ENCODE measurements at regions of chr1 and their contacts with region 1.

Region 1: DNA sequence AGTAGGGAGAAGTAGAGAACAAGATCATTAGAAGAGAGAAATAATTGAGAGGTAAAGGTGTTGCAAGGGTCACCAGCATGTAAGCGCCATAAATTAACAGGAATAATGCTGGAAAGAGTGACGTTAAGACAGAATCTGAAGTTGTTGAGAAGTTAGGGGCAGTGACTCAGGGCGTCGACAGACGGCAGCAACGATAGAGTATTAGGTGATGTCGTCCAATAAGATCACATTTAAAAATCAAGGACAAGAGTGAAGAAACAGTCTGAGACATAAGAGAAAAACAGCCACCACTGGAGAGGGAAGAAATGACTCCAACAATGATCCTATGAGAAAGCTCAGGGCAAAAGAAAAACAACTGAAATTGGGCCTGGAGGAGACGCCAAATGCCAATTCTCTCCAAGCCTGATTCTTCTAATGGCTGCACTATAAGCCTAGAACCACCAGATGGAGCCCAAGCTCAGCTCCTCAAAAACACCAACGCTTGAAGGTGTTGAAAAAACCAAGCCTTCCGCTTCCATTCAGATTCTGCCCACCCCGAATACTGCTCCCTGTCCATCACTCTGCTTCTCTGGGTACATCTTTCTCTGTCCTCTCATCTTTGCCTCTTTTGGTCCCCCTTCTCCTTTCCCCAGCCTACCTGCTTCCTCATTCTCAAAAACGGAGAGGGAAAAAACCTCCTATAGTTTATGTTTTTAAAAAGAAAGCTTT is 70.0 kb downstream of the LUZP1 start:
- DNase-seq: peak; percentile 47 to 55
- H3K4me3 ChIP-seq: no peak overlapping the region
- H3K27ac ChIP-seq: peak overlapping the region; percentile 86
- H3K4me1 ChIP-seq: peaks cover 48% of the 10 kb centered on the region
- H3K27me3 ChIP-seq: no peaks in the 10 kb centered on the region
- CTCF ChIP-seq: peak; percentile 80

Region 2: DNA sequence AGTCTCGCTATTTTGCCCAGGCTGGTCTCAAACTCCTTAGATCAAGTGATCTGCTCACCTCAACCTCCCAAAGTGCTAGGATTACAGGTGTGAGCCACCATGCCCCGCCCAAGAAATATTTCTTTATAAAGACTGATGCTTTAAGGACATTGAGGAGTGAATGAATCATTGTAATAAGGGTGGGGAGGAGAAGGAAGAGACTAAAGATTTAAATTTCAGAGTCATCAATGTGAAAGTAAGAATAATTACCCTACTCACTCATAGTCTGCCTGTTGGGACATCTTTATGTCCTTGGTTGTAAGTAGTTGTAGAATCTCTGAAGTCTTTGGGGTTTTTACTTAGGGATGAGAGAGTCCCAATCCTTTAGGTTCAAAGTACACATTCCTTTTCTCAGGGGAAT is 72.0 kb before region 1 on chr1:
- CTCF ChIA-PET with region 1: no interaction called
- POLR2A ChIA-PET with region 1: interaction called, 14 read pairs
- intact Hi-C with region 1: no loop called
- DNase-seq: peak in 1 of 2 experiments; percentile 69
- H3K4me3 ChIP-seq: peak overlapping the region; percentile 31; the same call in 1 of the 2 replicates
- H3K27ac ChIP-seq: peak overlapping the region; percentile 61
- H3K4me1 ChIP-seq: peaks cover 90% of the 10 kb centered on the region
- H3K27me3 ChIP-seq: no peaks in the 10 kb centered on the region
- CTCF ChIP-seq: no peak

Region 3: DNA sequence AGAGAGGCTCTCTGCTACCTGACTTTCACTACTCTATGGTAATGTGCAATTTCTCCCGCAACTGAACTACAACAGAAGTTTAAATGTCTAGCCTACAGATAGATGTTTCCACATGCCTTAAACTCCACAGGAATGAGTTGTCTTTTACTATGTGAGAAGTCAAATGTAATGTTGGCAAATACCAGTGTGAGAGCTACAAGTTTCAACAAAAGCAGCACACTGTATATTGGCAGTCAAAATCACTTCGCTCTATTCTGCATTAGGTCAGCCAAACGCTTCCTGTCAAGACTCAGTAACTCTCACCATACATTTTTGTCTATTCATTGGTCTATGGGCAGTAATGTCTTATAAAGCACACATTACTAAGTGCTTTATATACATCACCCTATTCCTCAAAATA is 28.2 kb after region 1 on chr1:
- CTCF ChIA-PET with region 1: no interaction called
- POLR2A ChIA-PET with region 1: no interaction called
- intact Hi-C with region 1: no loop called
- DNase-seq: peak in 1 of 2 experiments; percentile 37
- H3K4me3 ChIP-seq: no peak overlapping the region
- H3K27ac ChIP-seq: no peak overlapping the region
- H3K4me1 ChIP-seq: peaks cover 12% of the 10 kb centered on the region
- H3K27me3 ChIP-seq: no peaks in the 10 kb centered on the region
- CTCF ChIP-seq: no peak

Region 4: GRCh38 chr1:23184212-23184934 is 85.8 kb after region 1 on chr1:
- CTCF ChIA-PET with region 1: interaction called, 35 read pairs
- POLR2A ChIA-PET with region 1: interaction called, 9 read pairs
- intact Hi-C with region 1: loop called (anchors 1 kb)
- DNase-seq: no peak
- H3K4me3 ChIP-seq: no peak overlapping the region
- H3K27ac ChIP-seq: no peak overlapping the region
- H3K4me1 ChIP-seq: peaks cover 20% of the 10 kb centered on the region
- H3K27me3 ChIP-seq: no peaks in the 10 kb centered on the region
- CTCF ChIP-seq: peak; percentile 91

Region 5: GRCh38 chr1:23224714-23225648 is 126.4 kb after region 1 on chr1:
- CTCF ChIA-PET with region 1: no interaction called
- POLR2A ChIA-PET with region 1: no interaction called
- intact Hi-C with region 1: no loop called
- DNase-seq: peak; percentile 43 to 78
- H3K4me3 ChIP-seq: no peak overlapping the region
- H3K27ac ChIP-seq: no peak overlapping the region
- H3K4me1 ChIP-seq: peaks cover 13% of the 10 kb centered on the region; the same call in 1 of the 2 replicates
- H3K27me3 ChIP-seq: no peaks in the 10 kb centered on the region
- CTCF ChIP-seq: no peak

Region 6: DNA sequence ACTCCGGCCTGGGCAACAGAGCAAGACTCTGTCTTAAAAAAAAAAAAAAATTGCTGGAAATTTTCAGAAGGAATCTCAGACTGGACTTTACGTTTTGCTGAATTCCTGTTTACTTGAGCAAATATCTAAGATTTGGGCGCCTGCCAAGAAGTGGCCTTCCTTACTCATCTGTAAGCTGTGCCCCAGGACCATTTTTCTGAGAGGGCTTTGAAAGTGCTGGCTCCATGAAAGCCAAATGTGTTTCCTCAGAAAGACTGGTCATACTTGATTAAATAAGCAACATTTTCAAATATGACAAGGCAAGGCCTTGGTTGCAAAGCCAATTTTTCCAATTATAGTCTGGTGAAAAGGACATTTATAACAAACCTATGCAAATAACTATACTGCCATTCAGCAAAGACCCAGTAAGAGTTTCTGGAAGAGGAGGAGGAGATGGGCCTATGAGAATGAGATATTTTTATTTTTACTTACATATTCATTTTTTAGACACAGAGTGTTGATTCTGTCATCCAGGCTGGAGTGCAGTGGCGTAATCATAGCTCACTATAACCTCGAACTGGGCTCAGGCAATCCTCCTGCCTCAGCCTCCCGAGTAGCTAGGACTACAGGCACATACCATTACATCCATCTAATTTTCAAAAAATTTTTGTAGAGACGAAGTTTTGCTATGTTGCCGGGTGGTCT is 175.0 kb after region 1 on chr1:
- CTCF ChIA-PET with region 1: no interaction called
- POLR2A ChIA-PET with region 1: no interaction called
- intact Hi-C with region 1: loop called (anchors 10 kb)
- DNase-seq: peak; percentile 46 to 57
- H3K4me3 ChIP-seq: no peak overlapping the region
- H3K27ac ChIP-seq: no peak overlapping the region
- H3K4me1 ChIP-seq: peaks cover 24% of the 10 kb centered on the region
- H3K27me3 ChIP-seq: no peaks in the 10 kb centered on the region
- CTCF ChIP-seq: no peak

Region 7: GRCh38 chr1:23403735-23404486 is 305.3 kb after region 1 on chr1:
- CTCF ChIA-PET with region 1: no interaction called
- POLR2A ChIA-PET with region 1: interaction called, 15 read pairs
- intact Hi-C with region 1: no loop called
- DNase-seq: peak; percentile 92 to 96
- H3K4me3 ChIP-seq: peak overlapping the region; percentile 25; the same call in 1 of the 2 replicates
- H3K27ac ChIP-seq: peak overlapping the region; percentile 73
- H3K4me1 ChIP-seq: peaks cover 31% of the 10 kb centered on the region
- H3K27me3 ChIP-seq: no peaks in the 10 kb centered on the region
- CTCF ChIP-seq: peak; percentile 88

Measured in PC-9 (cell line).